Caco-2 (cell line): ENCODE measurements at regions of chr17 and their contacts with region 1.

Region 1: GRCh38 chr17:55513885-55514591 is 2.8 kb upstream of the SMIM36 start:
- DNase-seq: peak; percentile 72 to 84
- H3K4me3 ChIP-seq: no peak overlapping the region
- H3K4me3 Mint-ChIP-seq: no peak overlapping the region
- H3K27ac Mint-ChIP-seq: no peak overlapping the region
- H3K4me1 ChIP-seq: peaks cover 6% of the 10 kb centered on the region; the same call in 1 of the 2 replicates
- H3K4me1 Mint-ChIP-seq: peaks cover 8% of the 10 kb centered on the region
- H3K27me3 ChIP-seq: no peaks in the 10 kb centered on the region
- H3K27me3 Mint-ChIP-seq: no peaks in the 10 kb centered on the region
- CTCF ChIP-seq: peak; percentile 89 to 96

Region 2: DNA sequence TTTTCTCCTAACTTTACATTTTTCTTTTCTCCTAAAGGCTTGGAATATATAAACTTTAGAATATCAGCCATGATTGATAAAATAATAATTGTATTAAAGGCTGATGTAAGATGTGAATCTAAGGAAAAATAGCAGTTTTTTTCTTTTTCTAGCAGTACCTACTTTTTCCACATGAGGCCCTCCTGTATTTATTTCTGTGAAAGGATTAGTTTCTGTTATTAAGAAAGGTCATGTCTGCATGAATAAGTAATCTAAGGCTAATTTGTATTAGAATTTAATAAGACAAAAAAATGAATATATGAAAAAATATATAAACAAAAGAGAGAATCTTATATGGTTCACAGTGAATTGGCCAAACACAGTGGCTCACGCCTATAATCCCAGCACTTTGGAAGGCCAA is 460.2 kb before region 1 on chr17:
- CTCF ChIA-PET with region 1: no interaction called
- POLR2A ChIA-PET with region 1: no interaction called
- intact Hi-C with region 1: loop called (anchors 10 kb)
- DNase-seq: no peak
- H3K4me3 ChIP-seq: no peak overlapping the region
- H3K4me3 Mint-ChIP-seq: no peak overlapping the region
- H3K27ac Mint-ChIP-seq: no peak overlapping the region
- H3K4me1 ChIP-seq: no peaks in the 10 kb centered on the region
- H3K4me1 Mint-ChIP-seq: no peaks in the 10 kb centered on the region
- H3K27me3 ChIP-seq: no peaks in the 10 kb centered on the region
- H3K27me3 Mint-ChIP-seq: no peaks in the 10 kb centered on the region
- CTCF ChIP-seq: peak; percentile 17 to 47

Region 3: DNA sequence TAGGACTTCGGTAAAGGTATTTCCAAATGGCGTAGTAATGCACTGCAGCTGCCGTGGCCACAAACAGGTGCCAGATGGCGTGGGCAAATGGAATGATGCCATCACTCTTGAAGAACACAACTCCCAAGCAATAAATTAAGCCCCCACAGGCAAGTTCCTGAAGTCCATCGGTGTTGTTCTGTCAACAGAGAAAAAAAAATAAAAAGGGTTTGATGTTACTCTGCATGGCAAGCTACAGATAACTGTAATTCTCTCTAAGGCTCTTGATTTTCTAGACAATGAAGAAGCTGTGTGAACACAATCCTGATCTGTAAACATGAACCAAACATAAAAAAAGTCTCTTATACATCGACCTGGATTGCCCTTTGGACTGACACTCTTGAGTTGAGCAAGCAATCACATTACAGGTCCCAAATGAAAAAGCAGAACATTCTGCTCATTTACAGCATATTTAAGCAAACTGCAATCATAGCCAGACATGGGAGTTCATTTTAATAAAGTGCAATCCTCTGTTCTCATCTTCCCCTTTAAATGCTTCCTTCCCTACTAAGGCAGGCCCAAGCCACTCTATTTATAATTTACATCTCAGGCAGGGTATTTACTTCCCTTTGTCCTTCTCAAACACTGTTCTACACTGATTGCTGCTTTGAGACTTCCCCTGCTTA is 119.5 kb before region 1 on chr17:
- CTCF ChIA-PET with region 1: interaction called, 5 read pairs
- POLR2A ChIA-PET with region 1: no interaction called
- intact Hi-C with region 1: loop called (anchors 1 kb)
- DNase-seq: peak in 1 of 2 experiments; percentile 27
- H3K4me3 ChIP-seq: no peak overlapping the region
- H3K4me3 Mint-ChIP-seq: peak overlapping the region; percentile 8
- H3K27ac Mint-ChIP-seq: peak overlapping the region; percentile 54
- H3K4me1 ChIP-seq: peaks cover 9% of the 10 kb centered on the region
- H3K4me1 Mint-ChIP-seq: peaks cover 13% of the 10 kb centered on the region
- H3K27me3 ChIP-seq: no peaks in the 10 kb centered on the region
- H3K27me3 Mint-ChIP-seq: no peaks in the 10 kb centered on the region
- CTCF ChIP-seq: no peak

Region 4: DNA sequence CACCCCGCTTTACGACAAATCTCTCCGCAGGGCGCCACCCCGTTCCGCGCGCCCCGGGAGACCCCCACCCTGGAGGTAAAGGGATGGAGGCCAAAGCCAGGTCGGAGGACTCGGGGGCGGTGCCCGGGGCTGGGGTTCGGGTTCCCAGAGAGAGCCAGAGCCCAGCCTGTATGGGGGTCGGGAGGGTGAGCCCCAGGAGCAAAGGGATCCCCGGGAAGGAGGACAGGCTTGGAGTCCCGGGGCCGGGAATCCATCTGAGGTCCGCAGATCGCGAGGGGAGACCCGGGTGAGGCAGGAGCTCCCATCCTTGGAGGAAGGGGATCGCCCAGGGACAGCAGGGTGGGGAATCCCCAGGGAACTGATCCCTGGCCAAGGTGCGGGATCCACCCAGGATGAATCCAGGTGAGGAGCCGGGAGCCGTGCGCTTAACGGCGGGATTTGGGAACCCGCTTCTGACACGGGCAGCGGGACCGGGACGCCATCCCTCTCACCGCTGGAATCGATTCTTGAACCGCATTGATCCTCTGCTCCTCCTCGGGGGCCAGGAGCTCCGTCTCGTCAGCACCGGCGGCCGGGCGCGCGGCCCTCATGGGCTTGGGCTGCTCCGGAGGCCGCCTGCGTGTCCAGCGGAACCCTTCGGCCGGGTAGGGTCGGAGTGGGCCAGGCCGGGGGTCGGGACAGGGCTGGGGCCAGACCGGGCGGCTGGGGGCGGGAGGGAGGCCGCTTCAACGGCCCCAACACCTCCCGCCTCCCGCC is 92.7 kb before region 1 on chr17 and contains the start of gene MMD:
- CTCF ChIA-PET with region 1: interaction called, 4 read pairs
- POLR2A ChIA-PET with region 1: no interaction called
- intact Hi-C with region 1: loop called (anchors 2 kb)
- DNase-seq: peak in 1 of 2 experiments; percentile 46
- H3K4me3 ChIP-seq: peak within 1 kb of the TSS; percentile 78
- H3K4me3 Mint-ChIP-seq: peak within 1 kb of the TSS; percentile 90
- H3K27ac Mint-ChIP-seq: peak within 1 kb of the TSS; percentile 81
- H3K4me1 ChIP-seq: peaks cover 19% of the 10 kb centered on the region
- H3K4me1 Mint-ChIP-seq: peaks cover 64% of the 10 kb centered on the region
- H3K27me3 ChIP-seq: no peaks in the 10 kb centered on the region
- H3K27me3 Mint-ChIP-seq: no peaks in the 10 kb centered on the region
- CTCF ChIP-seq: no peak
- total RNA-seq, gene MMD: 38.6 and 39.0 TPM in 2 replicates

Region 5: GRCh38 chr17:55530064-55530463 is 16.0 kb after region 1 on chr17:
- CTCF ChIA-PET with region 1: no interaction called
- POLR2A ChIA-PET with region 1: no interaction called
- intact Hi-C with region 1: no loop called
- DNase-seq: no peak
- H3K4me3 ChIP-seq: no peak overlapping the region
- H3K4me3 Mint-ChIP-seq: no peak overlapping the region
- H3K27ac Mint-ChIP-seq: no peak overlapping the region
- H3K4me1 ChIP-seq: 0 out of 2 replicates have a peak, but pooled peaks cover 5% of the 10 kb centered on the region
- H3K4me1 Mint-ChIP-seq: no peaks in the 10 kb centered on the region
- H3K27me3 ChIP-seq: no peaks in the 10 kb centered on the region; the same call in 1 of the 2 replicates
- H3K27me3 Mint-ChIP-seq: peaks cover 10% of the 10 kb centered on the region
- CTCF ChIP-seq: no peak